ENCODE measurements at regions of chr20 and their contacts with region 1.

Region 1: DNA sequence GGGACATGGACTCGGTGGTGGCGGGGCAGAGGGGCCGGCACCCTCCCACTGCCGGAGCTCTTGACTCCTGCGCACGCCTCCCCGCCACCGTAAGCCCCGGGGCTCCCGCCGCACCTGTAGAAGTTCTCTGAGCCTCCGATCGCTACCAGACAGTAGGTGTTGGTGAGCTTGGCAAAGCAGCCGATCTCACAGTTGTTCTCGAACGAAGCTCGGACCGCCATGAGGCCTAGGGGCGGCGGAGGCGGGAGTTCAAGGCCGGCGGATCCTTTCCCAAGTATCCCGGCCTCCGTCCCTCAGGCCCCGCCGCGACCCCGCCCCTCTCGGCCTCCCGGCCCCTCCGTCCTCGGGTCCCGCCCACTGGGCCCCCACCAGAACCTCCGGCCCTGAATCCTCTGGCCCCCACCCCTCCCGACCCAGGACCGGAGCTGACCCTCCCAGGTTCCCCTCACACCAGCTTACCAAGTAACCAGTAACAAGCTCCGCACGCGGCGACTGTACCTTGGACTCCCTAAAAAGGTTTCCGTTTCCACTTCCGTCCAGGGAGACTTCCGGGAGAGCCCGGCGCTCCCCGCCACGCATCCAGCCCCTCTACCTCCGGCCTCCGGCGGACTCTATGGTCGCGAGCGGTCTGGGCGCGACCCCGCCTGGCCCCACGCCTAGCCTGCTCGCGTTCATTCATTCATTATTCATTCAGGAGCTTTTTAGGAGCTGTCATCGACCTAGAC is at the start of gene EIF6:
- DNase-seq: peak; percentile 93 to 97 (median 95)
- ATAC-seq: peak; percentile 95
- H3K4me3 ChIP-seq: peak within 1 kb of the TSS; percentile 85
- H3K27ac ChIP-seq: peak within 1 kb of the TSS; percentile 80
- H3K4me1 ChIP-seq: peaks cover 10 to 47% of the 10 kb centered on the region in 2 experiments; a peak in 4 of 5 replicates
- H3K27me3 ChIP-seq: no peaks in the 10 kb centered on the region
- CTCF ChIP-seq: no peak
- EP300 ChIP-seq: peak; percentile 16; the same call in 1 of the 2 replicates
- POLR2A ChIP-seq: peak; percentile 85
- RAD21 ChIP-seq: no peak
- polyA plus RNA-seq, gene EIF6: 807 to 832 TPM

Region 2: GRCh38 chr20:34955232-34956040 is 329.0 kb before region 1 on chr20 and contains the starts of genes GSS and MYH7B:
- CTCF ChIA-PET with region 1: no interaction called
- POLR2A ChIA-PET with region 1: no interaction called
- in situ Hi-C with region 1: no loop called
- intact Hi-C with region 1: no loop called
- DNase-seq: peak; percentile 97 to 99 (median 98)
- ATAC-seq: peak; percentile 95
- H3K4me3 ChIP-seq: peak within 1 kb of the TSS; percentile 55
- H3K27ac ChIP-seq: peak within 1 kb of the TSS; percentile 89
- H3K4me1 ChIP-seq: peaks cover 16 to 22% of the 10 kb centered on the region in 2 experiments; a peak in 4 of 5 replicates
- H3K27me3 ChIP-seq: no peaks in the 10 kb centered on the region
- CTCF ChIP-seq: peak; percentile 61 to 73 (median 68); a peak in 5 of 6 replicates
- EP300 ChIP-seq: no peak
- POLR2A ChIP-seq: peak; percentile 97
- RAD21 ChIP-seq: peak; percentile 65 to 75
- polyA plus RNA-seq, gene GSS: 18.4 to 40.4 TPM
- polyA plus RNA-seq, gene MYH7B: not detected

Region 3: DNA sequence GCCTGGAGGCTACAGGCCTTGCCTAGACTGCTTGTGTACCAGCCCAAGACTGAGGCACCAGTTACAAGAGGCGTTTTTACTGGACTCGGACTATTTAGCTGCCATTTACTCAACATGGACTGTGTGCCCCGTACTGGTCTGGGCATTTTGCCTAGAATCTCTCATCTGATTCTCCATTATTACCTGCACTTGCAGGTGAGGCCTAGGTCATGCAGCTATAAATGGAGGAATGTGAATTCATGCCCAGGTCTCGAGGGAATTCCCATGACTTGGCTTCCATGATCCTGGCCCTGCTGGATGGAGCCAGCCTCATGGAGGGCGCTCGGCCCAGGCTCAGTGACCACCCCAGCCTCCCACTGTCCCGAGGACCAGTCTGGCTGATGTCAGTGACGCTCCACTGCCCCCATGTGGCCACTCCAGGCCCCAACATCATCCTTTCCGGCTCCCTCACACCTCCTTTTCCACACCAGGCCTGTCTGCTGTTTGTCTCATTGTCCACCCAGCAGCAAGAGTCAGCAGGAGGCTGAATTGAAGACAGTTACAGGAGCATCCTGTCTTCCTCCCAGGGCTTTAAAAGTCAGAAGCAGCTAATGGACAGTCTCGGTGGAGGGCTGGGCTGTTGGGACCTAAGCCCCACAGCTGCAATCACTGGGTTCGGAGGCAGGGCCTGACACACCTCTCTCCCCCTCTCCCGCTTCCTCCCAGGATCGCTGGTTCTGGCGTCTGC is 15.2 kb before region 1 on chr20:
- CTCF ChIA-PET with region 1: no interaction called
- POLR2A ChIA-PET with region 1: interaction called, 10 read pairs
- in situ Hi-C with region 1: no loop called
- intact Hi-C with region 1: no loop called
- DNase-seq: peak; percentile 80 to 83 (median 82)
- ATAC-seq: peak; percentile 86
- H3K4me3 ChIP-seq: no peak overlapping the region
- H3K27ac ChIP-seq: no peak overlapping the region
- H3K4me1 ChIP-seq: peaks cover 8 to 33% of the 10 kb centered on the region in 2 experiments; a peak in 4 of 5 replicates
- H3K27me3 ChIP-seq: no peaks in the 10 kb centered on the region
- CTCF ChIP-seq: peak; percentile 85 to 93 (median 90)
- EP300 ChIP-seq: no peak
- POLR2A ChIP-seq: no peak
- RAD21 ChIP-seq: peak; percentile 61 to 83